ENCODE measurements at regions of chr18 and their contacts with region 1.

Region 1: GRCh38 chr18:32470713-32471633 is at the start of gene GAREM1:
- DNase-seq: peak; percentile 96
- H3K4me3 ChIP-seq: peak within 1 kb of the TSS; percentile 68
- H3K27ac ChIP-seq: no peak within 1 kb of the TSS
- H3K27me3 ChIP-seq: peaks cover 4% of the 10 kb centered on the region
- CTCF ChIP-seq: peak; percentile 66
- polyA plus RNA-seq, gene GAREM1: 2.8 and 3.4 TPM in 2 replicates

Region 2: DNA sequence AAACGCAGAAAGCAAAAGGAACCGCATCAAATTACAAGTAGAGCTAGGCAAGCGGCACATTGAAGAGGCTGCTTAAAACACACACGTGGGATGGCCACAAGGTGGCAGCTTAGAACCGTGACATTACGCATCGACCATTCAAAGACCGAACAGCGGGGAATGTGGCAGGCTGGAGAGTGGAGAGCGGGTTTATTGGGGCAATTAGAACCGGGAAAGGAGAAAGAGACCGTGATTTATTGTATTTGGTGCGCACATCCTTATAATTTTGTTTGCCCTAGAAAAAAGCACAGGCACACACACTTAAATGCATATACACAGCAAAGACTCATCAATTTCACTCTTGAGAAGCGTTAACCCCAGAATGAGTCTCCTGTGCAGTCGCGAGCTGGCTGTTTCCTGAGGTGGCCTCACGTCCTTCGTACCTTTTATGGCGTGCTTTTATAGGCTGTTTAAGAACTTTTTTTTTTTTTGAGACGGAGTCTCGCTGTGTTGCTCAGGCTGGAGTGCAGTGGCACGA is 312.8 kb before region 1 on chr18:
- CTCF ChIA-PET with region 1: interaction called, 65 read pairs
- POLR2A ChIA-PET with region 1: no interaction called
- DNase-seq: peak; percentile 72
- H3K4me3 ChIP-seq: no peak overlapping the region
- H3K27ac ChIP-seq: no peak overlapping the region
- H3K27me3 ChIP-seq: peaks cover 9% of the 10 kb centered on the region
- CTCF ChIP-seq: peak; percentile 92

Region 3: DNA sequence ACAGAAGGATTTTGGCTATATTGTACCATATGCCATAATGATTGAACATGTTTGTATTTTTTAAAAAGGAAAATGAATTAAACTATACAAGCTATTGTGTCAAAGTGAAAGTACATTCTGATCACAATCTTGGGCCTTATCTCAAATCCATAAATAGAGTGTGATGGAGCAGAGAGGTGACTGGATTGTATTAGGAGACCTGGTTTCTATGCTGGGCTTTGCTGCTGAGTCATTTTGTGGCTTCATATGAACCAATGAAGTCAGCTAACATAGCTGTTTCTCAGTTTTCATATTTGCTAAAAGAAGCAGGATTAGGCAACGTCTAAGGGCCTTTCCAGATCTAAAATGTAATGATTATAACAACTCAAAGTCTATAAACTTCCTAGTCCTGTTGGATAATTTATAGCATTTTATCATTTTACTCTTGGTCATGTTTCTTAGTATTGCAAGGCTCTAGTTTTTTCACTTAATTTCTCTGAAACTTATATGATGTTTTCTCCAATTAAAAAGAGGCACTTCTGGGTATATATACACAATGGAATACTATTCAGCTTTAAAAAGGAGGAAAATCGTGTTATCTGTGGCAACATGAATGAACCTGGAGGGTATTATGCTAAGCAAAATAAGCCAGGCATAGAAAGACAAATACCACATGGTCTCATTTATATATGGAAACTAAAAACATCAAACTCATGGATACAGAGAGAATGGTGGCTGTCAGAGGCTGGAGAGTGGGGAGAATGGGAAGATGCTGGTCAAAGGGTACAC is 168.8 kb before region 1 on chr18:
- CTCF ChIA-PET with region 1: interaction called, 31 read pairs
- POLR2A ChIA-PET with region 1: interaction called, 3 read pairs
- DNase-seq: peak; percentile 58
- H3K4me3 ChIP-seq: no peak overlapping the region
- H3K27ac ChIP-seq: peak overlapping the region; percentile 25
- H3K27me3 ChIP-seq: no peaks in the 10 kb centered on the region
- CTCF ChIP-seq: no peak

Region 4: GRCh38 chr18:32383050-32383819 is 87.7 kb before region 1 on chr18:
- CTCF ChIA-PET with region 1: interaction called, 10 read pairs
- POLR2A ChIA-PET with region 1: no interaction called
- DNase-seq: peak; percentile 83
- H3K4me3 ChIP-seq: no peak overlapping the region
- H3K27ac ChIP-seq: peak overlapping the region; percentile 40
- H3K27me3 ChIP-seq: no peaks in the 10 kb centered on the region
- CTCF ChIP-seq: no peak

Region 5: DNA sequence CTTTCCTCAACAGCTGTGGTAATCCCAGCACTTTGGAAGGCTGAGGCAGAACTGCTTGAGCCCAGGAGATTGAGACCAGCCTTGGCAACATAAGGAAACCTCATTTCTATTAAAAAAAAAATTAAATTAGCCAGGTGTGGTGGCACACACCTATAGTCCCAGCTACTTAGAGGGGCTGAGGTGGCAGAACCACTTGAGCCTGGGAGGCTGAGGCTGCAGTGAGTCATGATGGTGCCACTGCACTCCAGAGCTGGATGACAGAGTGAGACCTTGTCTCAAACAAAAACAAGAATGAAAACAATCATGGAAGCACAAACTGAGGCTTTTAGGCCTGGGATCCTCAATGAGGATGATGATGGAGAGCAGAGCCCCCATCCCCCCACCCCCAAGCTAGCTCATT is 20.1 kb before region 1 on chr18:
- CTCF ChIA-PET with region 1: interaction called, 12 read pairs
- POLR2A ChIA-PET with region 1: no interaction called
- DNase-seq: no peak
- H3K4me3 ChIP-seq: no peak overlapping the region
- H3K27ac ChIP-seq: no peak overlapping the region
- H3K27me3 ChIP-seq: no peaks in the 10 kb centered on the region
- CTCF ChIP-seq: no peak

Region 6: GRCh38 chr18:32714571-32715148 is 243.7 kb after region 1 on chr18:
- CTCF ChIA-PET with region 1: no interaction called
- POLR2A ChIA-PET with region 1: no interaction called
- DNase-seq: peak; percentile 23
- H3K4me3 ChIP-seq: no peak overlapping the region
- H3K27ac ChIP-seq: no peak overlapping the region
- H3K27me3 ChIP-seq: no peaks in the 10 kb centered on the region
- CTCF ChIP-seq: peak; percentile 86

Region 7: GRCh38 chr18:32779010-32779409 is 308.0 kb after region 1 on chr18:
- CTCF ChIA-PET with region 1: no interaction called
- POLR2A ChIA-PET with region 1: no interaction called
- DNase-seq: no peak
- H3K4me3 ChIP-seq: no peak overlapping the region
- H3K27ac ChIP-seq: no peak overlapping the region
- H3K27me3 ChIP-seq: peaks cover 1% of the 10 kb centered on the region
- CTCF ChIP-seq: no peak